Right ventricle myocardium inferior (tissue), 1 donor: ENCODE measurements at regions of chr10 and their contacts with region 1.

Region 1: GRCh38 chr10:38094158-38094920 is at the start of gene ZNF37A:
- DNase-seq: peak; percentile 98
- ATAC-seq: peak; percentile 99
- total RNA-seq, gene ZNF37A: 7.3 TPM

Region 2: DNA sequence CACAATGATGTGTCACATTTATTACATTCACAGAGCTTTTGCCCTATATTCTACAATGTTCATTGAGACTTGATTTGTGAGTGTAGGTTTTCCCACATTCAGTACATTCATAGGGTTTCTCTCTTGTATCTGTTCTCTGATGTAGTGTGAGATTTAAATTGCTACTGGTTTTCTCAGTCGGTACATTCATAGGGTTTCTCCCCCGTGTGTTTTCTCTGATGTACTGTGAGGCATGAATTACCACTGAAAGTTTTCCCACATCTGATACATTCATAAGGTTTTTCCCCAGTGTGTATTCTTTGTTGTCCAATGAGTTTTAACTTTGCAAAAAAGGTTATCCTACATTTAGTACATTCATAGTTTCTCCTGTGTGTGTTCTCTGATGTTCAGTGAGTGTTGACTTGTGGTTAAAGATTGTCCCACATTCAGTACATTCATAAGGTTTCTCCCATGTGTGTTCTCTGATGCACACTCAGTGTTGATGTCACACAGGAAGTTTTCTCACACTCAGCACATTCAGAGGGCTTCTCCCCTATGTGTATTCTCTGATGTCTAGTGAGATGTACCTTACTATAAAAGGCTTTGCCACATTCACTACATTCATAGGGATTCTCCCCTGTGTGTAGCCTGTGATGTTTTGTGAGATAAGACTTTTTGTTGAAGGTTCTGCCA is 299.9 kb before region 1 on chr10:
- intact Hi-C with region 1: no loop called
- DNase-seq: no peak
- ATAC-seq: no peak

Region 3: GRCh38 chr10:37857287-37858211 is 236.8 kb before region 1 on chr10 and contains the start of gene ZNF248:
- intact Hi-C with region 1: loop called (anchors 10 kb)
- DNase-seq: peak; percentile 99
- ATAC-seq: peak; percentile 99
- total RNA-seq, gene ZNF248: 13.2 TPM

Region 4: DNA sequence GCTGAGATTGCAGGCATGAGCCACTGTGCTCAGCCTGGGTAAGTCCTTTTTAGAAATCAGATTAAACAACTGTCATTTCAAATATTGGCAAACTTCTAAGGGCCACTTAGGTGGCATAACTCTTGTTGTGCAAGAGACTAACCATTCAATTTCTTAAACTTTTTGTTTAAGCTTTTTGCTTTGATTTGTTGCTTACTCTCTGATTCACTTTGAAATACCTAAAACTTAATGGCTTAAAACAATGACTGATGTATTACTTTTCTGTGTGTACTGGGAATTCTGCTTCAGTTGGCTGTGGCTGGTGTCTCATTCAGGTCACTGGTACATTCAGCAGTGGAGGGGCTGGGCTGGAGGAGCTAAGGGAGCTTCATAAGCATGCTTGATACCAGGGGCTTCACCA is 146.8 kb before region 1 on chr10:
- intact Hi-C with region 1: no loop called
- DNase-seq: no peak
- ATAC-seq: no peak

Region 5: GRCh38 chr10:37976091-37976879 is 118.1 kb before region 1 on chr10 and contains the start of gene ZNF25:
- intact Hi-C with region 1: loop called (anchors 5 kb)
- DNase-seq: peak; percentile 99
- ATAC-seq: peak; percentile 98
- total RNA-seq, gene ZNF25: 16.7 TPM

Region 6: GRCh38 chr10:38010119-38010903 is 84.0 kb before region 1 on chr10 and contains the start of gene ZNF33A:
- intact Hi-C with region 1: loop called (anchors 1 kb)
- DNase-seq: peak; percentile 93
- ATAC-seq: peak; percentile 95
- total RNA-seq, gene ZNF33A: 21.2 TPM

Region 7: GRCh38 chr10:38054361-38054797 is 40.0 kb before region 1 on chr10:
- intact Hi-C with region 1: no loop called
- DNase-seq: no peak
- ATAC-seq: no peak